H1 (cell line): ENCODE measurements at regions of chr1 and their contacts with region 1.

Region 1: DNA sequence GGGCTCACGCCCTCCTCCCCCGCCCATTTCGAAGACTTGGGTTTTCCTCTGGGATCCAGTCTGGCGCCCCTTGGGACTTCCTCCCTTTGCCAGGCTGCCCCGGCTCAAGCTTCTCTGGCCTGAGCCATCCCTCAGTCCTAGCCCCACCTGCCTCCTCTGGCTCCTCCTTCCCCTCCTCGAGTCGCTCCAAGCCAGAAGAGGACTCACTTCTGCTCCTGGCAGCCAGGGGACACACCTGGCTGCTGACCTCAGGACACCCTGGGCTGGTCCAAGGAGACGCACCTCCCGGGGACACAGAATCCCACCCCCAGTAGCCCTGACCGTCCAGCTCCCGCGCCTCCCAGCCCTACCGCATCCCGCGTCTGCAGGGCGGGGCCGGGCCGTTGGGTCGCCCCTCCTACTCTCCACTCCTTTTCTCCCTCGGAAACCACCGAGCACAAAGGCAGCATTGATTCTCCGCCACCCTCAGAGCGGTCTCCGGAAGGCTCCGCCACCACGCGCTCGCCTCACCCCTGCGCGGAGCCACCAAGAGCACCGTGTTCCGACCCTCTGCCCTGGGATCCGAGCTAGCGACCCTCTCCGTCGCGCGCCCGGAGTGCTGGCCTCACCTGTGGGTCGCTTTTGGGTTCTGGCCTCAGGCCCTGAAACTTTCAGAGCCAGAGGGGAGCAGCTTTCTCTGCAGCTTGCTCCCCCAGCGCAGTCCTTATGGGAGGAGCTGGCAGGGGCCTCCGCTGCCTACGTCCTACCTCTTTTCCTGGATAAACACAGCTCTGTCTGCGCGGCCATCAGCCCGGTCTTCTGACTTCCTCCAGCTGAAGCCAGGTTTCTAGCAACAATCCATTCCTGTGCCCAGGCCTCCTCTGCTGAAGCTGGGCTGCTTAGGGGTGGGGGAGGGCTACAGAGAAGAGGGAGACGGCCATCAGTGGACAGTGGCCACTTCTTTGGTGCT is at the start of gene C2CD4D:
- DNase-seq: peak; percentile 65 to 88
- H3K4me3 ChIP-seq: peak within 1 kb of the TSS; percentile 43 to 69 (median 54)
- H3K27ac ChIP-seq: peak within 1 kb of the TSS; percentile 85
- H3K4me1 ChIP-seq: peaks cover 4 to 17% (median 9%) of the 10 kb centered on the region in 4 experiments
- H3K27me3 ChIP-seq: peaks cover 10 to 24% (median 21%) of the 10 kb centered on the region in 4 experiments
- CTCF ChIP-seq: peak; percentile 8 to 24 (median 15); a peak in 3 of 4 replicates
- EP300 ChIP-seq: no peak
- POLR2A ChIP-seq: peak; percentile 85 to 91
- RAD21 ChIP-seq: peak in 1 of 2 experiments; percentile 10; a peak in 1 of 4 replicates
- total RNA-seq, gene C2CD4D: 0.54 and 0.71 TPM in 2 replicates

Region 2: DNA sequence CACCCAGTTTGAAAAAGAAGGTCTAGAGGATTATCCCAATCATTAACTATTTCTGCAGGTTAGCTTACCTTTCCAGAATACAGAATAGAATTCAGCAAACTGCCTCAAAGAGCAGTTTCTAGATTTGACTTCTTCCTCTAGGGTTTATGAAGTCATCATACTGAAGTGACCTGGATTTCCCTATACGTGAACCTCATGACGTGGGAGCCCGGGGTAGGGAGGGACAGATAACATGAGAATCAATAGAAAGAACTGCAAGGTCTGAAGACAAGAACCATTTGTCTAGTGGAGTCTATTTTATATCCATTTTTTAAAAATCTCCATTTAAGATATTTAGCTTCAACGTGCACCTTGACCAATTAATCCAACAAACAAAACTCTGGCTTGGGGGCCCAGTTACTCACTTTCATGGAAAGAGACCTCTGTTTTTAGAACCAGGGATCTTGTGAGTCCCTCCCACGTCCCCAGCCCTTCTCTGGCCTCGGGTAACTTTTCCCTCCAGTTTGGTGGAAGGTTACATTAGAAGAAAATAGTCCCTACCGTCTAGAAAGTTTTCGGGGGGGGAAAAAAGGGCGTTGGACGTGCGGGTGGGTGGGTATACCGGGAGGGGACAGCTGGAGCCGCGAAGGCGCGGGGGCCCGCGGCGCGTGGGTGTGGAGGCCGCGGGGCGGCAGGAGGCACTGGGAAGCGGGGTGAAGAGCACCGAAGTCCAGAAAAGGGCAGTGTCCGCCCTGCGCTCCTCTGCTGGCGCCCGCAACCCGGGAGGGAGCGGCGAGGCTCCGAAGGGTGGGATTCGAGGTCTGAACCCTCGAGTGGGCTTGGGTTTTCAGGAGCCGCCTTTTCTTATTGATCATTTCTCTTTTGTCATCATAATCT is 366.6 kb before region 1 on chr1:
- CTCF ChIA-PET with region 1: no interaction called
- POLR2A ChIA-PET with region 1: no interaction called
- DNase-seq: peak in 1 of 2 experiments; percentile 73
- H3K4me3 ChIP-seq: peak overlapping the region; percentile 42 to 66 (median 50)
- H3K27ac ChIP-seq: no peak overlapping the region; the same call in 1 of the 2 replicates
- H3K4me1 ChIP-seq: no peaks in the 10 kb centered on the region; a peak in 2 of 7 replicates
- H3K27me3 ChIP-seq: no peaks in the 10 kb centered on the region
- CTCF ChIP-seq: no peak
- EP300 ChIP-seq: no peak
- POLR2A ChIP-seq: peak; percentile 40 to 49
- RAD21 ChIP-seq: no peak

Region 3: GRCh38 chr1:151720974-151721787 is 118.5 kb before region 1 on chr1 and contains the start of gene RIIAD1:
- CTCF ChIA-PET with region 1: interaction called, 17 read pairs
- POLR2A ChIA-PET with region 1: interaction called, 3 read pairs
- DNase-seq: no peak
- H3K4me3 ChIP-seq: peak within 1 kb of the TSS; percentile 55 to 85 (median 60)
- H3K27ac ChIP-seq: no peak within 1 kb of the TSS
- H3K4me1 ChIP-seq: peaks cover 2 to 11% (median 4%) of the 10 kb centered on the region in 4 experiments
- H3K27me3 ChIP-seq: peaks cover 6 to 34% (median 28%) of the 10 kb centered on the region in 4 experiments
- CTCF ChIP-seq: no peak
- EP300 ChIP-seq: no peak
- POLR2A ChIP-seq: no peak
- RAD21 ChIP-seq: no peak
- total RNA-seq, gene RIIAD1: not detected in 2 replicates

Region 4: DNA sequence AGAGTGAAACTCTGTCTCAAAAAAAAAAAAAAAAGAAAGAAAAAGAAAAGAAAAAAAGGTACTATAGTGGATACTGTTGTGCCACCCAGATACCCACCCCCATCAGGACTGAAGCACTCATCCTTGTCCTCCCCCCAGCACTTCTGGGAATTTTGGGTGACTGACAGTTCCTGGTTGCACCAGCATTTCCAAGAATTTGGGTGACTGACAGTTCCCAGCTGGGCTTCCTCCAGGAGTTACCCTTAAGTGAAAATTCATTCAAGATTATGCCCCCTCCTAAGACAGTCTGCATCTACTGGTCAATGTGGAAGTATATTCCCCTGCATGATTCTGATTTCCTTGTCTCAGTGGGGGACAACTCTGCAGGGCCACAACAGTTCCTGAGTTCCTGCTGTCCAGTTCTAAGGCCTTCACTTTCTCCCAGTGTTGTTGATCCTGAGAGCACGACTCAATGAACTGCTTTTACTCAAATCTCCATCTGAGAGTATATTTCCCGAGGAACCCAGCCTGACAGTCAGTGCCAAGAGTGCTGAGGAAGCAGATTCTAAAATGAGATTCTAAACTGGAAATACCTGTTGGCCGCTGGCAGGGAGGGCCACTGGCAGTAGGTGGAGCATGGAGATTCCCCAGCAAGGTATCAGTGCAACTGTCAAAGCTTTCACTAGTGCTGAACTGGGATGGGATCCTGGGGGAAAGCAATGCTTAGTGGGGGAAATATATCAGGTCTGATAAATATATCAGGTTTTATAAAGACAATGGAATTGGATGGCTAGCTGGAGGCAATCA is 99.9 kb before region 1 on chr1:
- CTCF ChIA-PET with region 1: interaction called, 26 read pairs
- POLR2A ChIA-PET with region 1: interaction called, 3 read pairs
- DNase-seq: no peak
- H3K4me3 ChIP-seq: no peak overlapping the region
- H3K27ac ChIP-seq: no peak overlapping the region
- H3K4me1 ChIP-seq: peaks cover 0 to 5% (median 3%) of the 10 kb centered on the region in 4 experiments; a peak in 3 of 7 replicates
- H3K27me3 ChIP-seq: no peaks in the 10 kb centered on the region; a peak in 1 of 7 replicates
- CTCF ChIP-seq: no peak
- EP300 ChIP-seq: no peak
- POLR2A ChIP-seq: no peak
- RAD21 ChIP-seq: peak in 1 of 2 experiments; percentile 6; a peak in 1 of 4 replicates

Region 5: GRCh38 chr1:151799179-151799949 is 40.4 kb before region 1 on chr1:
- CTCF ChIA-PET with region 1: interaction called, 12 read pairs
- POLR2A ChIA-PET with region 1: interaction called, 5 read pairs
- DNase-seq: no peak
- H3K4me3 ChIP-seq: no peak overlapping the region
- H3K27ac ChIP-seq: peak overlapping the region; percentile 2; the same call in 1 of the 2 replicates
- H3K4me1 ChIP-seq: no peaks in the 10 kb centered on the region; a peak in 1 of 7 replicates
- H3K27me3 ChIP-seq: peaks cover 0 to 3% (median 1%) of the 10 kb centered on the region in 4 experiments; a peak in 1 of 7 replicates
- CTCF ChIP-seq: no peak
- EP300 ChIP-seq: no peak
- POLR2A ChIP-seq: no peak
- RAD21 ChIP-seq: no peak

Region 6: GRCh38 chr1:151828965-151829698 is 10.6 kb before region 1 on chr1:
- CTCF ChIA-PET with region 1: interaction called, 5 read pairs
- POLR2A ChIA-PET with region 1: interaction called, 20 read pairs
- DNase-seq: no peak
- H3K4me3 ChIP-seq: peak overlapping the region in 3 of 4 experiments; percentile 11 to 33 (median 14); a peak in 5 of 8 replicates
- H3K27ac ChIP-seq: no peak overlapping the region
- H3K4me1 ChIP-seq: peaks cover 14 to 40% (median 29%) of the 10 kb centered on the region in 4 experiments
- H3K27me3 ChIP-seq: no peaks in the 10 kb centered on the region; a peak in 1 of 7 replicates
- CTCF ChIP-seq: no peak
- EP300 ChIP-seq: no peak
- POLR2A ChIP-seq: no peak
- RAD21 ChIP-seq: no peak